ENCODE measurements at regions of chr1 and their contacts with region 1.

Region 1: DNA sequence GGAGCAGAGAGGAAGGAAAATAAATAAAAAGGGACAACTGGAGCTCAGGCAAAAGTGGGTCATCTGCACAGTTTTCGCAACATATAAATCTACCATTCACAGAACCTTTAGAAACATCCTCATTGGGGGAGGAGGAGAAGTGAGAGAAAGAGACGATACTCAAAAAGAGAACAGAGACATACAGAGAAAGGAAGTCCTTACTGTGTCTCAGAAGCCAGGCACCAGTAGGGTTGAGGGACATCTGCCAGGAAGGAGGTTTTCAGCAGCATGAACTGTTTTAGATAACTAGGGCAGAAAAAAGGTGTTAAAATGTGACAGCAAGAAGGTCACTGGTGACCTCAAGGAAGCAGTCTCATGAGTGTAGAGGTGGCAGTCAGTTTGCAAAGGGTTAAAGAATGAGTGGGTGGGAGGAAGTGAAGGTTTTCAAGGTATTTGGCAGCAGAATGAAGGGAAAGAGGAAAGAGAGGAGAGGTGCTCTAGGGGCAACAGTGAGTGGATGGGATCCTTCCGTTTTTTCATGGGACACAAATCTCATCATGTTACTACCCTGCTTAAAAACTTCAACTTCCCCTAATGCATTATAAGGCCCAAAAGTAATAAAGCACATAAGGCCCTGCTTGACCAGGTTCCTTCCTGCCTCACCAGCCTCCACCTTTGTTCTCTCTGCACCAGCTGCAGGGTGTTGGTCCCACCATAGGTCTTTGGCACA is 9.5 kb downstream of the JAK1 start:
- H3K4me3 Mint-ChIP-seq: peak overlapping the region; percentile 32
- H3K27ac Mint-ChIP-seq: no peak overlapping the region
- H3K4me1 Mint-ChIP-seq: peaks cover 48% of the 10 kb centered on the region
- H3K27me3 Mint-ChIP-seq: no peaks in the 10 kb centered on the region

Region 2: GRCh38 chr1:64841330-64842065 is 115.4 kb before region 1 on chr1:
- intact Hi-C with region 1: no loop called
- H3K4me3 Mint-ChIP-seq: no peak overlapping the region
- H3K27ac Mint-ChIP-seq: no peak overlapping the region
- H3K4me1 Mint-ChIP-seq: peaks cover 32% of the 10 kb centered on the region
- H3K27me3 Mint-ChIP-seq: no peaks in the 10 kb centered on the region

Region 3: DNA sequence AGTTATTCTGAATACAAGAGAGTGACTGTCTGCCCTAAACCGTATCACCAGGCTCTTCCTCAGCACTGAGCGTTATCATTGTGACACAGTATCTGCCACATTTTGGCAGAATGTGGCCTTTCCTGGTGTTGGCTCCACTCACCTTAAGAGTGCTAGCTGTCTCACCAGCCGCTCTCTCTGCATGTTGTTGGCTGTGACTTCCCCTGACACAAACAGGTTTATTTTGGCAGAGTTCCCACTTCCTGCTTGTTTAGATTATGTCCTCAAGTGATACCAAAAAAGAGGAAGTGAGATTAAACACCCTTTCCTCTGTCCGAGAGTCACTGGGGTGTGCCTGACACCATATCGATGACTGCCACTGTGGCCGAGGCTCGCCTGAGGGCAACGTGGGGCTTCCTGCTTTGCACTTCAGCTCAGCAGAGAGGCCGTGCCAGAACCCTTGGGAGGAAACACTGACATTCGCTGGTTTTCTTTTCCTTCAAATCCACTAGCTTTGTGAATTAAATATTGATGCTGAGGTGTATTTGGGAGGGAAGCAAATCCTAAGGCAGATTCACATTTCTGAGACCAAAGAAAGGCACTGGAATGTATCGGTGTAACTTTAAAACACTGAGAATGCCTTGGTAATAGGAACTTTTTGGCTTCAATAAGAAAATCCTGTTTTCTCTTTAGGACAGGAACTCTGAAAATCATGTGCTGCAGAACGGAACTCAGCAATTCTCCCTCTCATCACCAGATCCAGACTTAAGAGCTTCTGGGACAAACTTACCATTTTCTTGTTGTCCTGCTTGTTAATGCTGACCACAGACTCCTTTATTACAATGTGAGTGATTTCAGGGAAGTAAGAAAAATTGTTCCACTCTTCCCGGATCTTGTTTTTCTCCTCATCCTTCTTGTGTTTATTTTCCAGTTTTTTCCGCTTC is 92.6 kb before region 1 on chr1:
- intact Hi-C with region 1: loop called (anchors 5 kb)
- H3K4me3 Mint-ChIP-seq: peak overlapping the region; percentile 45
- H3K27ac Mint-ChIP-seq: peak overlapping the region; percentile 82
- H3K4me1 Mint-ChIP-seq: peaks cover 65% of the 10 kb centered on the region
- H3K27me3 Mint-ChIP-seq: no peaks in the 10 kb centered on the region

Region 4: DNA sequence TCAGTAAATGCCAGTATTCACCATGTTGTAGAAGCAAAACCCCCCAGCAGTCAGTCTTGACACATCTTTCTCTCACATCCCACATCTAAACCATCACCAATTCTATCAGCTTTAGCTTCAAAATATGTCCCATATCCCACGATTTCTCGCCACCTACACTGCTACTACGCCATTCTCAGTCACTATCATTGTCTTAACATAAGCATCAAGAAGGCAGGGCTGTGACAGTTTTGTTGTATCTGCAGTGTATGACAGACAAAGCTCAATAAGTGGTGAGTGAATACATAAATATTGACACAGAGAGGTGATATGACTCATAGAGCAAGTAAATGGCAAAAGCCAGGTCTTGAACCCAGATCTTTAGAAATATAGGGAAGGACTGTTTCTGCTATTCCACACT is 50.4 kb before region 1 on chr1:
- intact Hi-C with region 1: no loop called
- H3K4me3 Mint-ChIP-seq: no peak overlapping the region
- H3K27ac Mint-ChIP-seq: no peak overlapping the region
- H3K4me1 Mint-ChIP-seq: peaks cover 67% of the 10 kb centered on the region
- H3K27me3 Mint-ChIP-seq: no peaks in the 10 kb centered on the region

Region 5: DNA sequence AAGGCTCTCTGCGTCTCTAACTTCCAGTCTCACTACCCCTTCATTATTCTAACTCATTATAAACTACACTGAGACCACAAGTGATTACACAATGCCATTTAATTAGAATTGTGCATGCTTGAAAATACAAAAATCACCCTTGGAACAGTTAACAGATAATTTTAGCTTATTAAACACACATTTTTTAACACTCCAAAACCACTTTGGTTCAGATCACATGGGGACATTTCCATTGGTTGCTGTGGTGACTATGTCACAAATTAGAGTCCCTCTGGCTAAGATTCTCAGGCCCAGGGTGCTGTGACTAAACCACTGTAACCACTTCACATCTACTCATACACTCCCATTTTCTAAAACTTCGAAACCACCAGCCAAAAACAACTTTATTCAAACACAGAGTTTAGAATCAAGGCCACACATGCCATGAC is 33.6 kb before region 1 on chr1:
- intact Hi-C with region 1: loop called (anchors 5 kb)
- H3K4me3 Mint-ChIP-seq: no peak overlapping the region
- H3K27ac Mint-ChIP-seq: peak overlapping the region; percentile 7
- H3K4me1 Mint-ChIP-seq: peaks cover 62% of the 10 kb centered on the region
- H3K27me3 Mint-ChIP-seq: no peaks in the 10 kb centered on the region

Measured in dendritic cell treated with granulocyte-macrophage colony-stimulating factor and Interleukin-4, amounts not matched to agents 40 ng/mL and 50 ng/mL, for 4 days (primary cell).